ENCODE measurements at regions of chr10 and their contacts with region 1.

Region 1: DNA sequence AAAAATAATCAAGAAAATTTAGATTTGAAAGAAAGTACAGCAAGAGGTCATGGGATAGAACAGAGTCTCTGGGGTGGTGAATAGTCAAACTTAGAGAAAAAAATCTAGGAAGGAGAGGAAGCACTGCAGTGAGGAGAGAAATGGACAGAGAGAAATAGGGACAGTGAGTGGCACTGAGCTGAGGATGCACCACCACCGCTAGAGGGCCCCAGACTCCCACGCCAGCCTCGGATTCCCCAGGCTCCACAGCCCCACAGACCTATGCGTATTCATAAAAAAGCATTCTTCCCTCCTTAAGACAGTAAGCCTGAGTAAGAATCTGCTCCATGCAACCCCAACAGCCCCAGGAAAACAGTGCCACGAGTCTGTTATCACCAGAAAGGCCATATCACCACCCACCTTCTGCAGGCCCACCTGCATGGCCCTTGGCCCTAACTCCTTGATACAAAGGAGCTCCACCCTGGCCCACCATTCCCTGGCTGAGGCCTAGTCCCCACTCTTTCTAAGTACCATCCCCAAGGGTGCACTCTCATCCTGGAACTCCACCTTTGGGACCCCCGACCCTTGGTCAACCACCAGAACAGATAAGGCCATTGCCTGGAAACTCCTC is 91.0 kb downstream of the ALOX5 start:
- DNase-seq: peak; percentile 62 to 87 (median 85)
- H3K4me3 ChIP-seq: no peak overlapping the region
- H3K27ac ChIP-seq: no peak overlapping the region
- H3K4me1 ChIP-seq: peaks cover 22 to 54% (median 40%) of the 10 kb centered on the region in 4 experiments
- H3K27me3 ChIP-seq: no peaks in the 10 kb centered on the region

Region 2: DNA sequence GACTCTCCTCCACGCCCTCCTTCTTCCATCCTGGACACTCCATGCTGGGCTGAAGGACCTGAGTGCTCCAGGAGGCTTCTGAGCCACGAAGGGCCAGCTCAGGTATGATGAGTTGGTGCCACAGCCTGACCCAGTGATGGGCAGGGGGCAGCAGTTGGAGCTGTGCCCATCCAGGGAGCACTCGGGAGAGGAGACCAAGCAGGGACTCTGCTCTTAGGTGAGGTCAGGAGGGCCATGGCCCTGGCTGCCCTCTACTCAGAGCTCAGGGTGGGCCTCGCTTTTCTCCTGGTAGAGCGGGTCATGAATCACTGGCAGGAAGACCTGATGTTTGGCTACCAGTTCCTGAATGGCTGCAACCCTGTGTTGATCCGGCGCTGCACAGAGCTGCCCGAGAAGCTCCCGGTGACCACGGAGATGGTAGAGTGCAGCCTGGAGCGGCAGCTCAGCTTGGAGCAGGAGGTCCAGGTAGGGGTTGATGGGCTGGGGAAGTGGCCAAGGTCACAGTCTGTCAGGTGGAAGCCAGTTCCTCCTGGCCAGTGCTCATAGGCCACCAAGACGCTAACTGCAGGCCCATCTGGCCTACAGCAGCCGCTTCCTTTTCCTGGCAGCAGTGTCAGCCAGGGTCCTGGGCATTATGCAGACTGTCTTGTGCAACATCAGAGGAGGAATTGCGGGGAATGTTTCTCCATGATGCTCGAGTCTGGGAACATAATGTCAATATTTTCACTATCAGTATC is 40.2 kb before region 1 on chr10:
- CTCF ChIA-PET with region 1: no interaction called
- POLR2A ChIA-PET with region 1: no interaction called
- DNase-seq: peak in 2 of 3 donors; percentile 71 to 87
- H3K4me3 ChIP-seq: peak overlapping the region in 2 of 7 experiments; percentile 1 to 3
- H3K27ac ChIP-seq: no peak overlapping the region
- H3K4me1 ChIP-seq: peaks cover 8 to 72% (median 64%) of the 10 kb centered on the region in 4 experiments
- H3K27me3 ChIP-seq: no peaks in the 10 kb centered on the region

Region 3: GRCh38 chr10:45437587-45438465 is 27.2 kb before region 1 on chr10:
- CTCF ChIA-PET with region 1: no interaction called
- POLR2A ChIA-PET with region 1: no interaction called
- DNase-seq: peak in 2 of 3 donors; percentile 46 to 58
- H3K4me3 ChIP-seq: no peak overlapping the region
- H3K27ac ChIP-seq: peak overlapping the region in 1 of 2 experiments; percentile 69
- H3K4me1 ChIP-seq: peaks cover 0 to 10% (median 2%) of the 10 kb centered on the region in 4 experiments
- H3K27me3 ChIP-seq: no peaks in the 10 kb centered on the region

Region 4: GRCh38 chr10:45553155-45553554 is 88.1 kb after region 1 on chr10:
- CTCF ChIA-PET with region 1: no interaction called
- POLR2A ChIA-PET with region 1: no interaction called
- DNase-seq: no peak
- H3K4me3 ChIP-seq: no peak overlapping the region
- H3K27ac ChIP-seq: no peak overlapping the region
- H3K4me1 ChIP-seq: peaks cover 6 to 25% (median 19%) of the 10 kb centered on the region in 4 experiments
- H3K27me3 ChIP-seq: no peaks in the 10 kb centered on the region

Region 5: DNA sequence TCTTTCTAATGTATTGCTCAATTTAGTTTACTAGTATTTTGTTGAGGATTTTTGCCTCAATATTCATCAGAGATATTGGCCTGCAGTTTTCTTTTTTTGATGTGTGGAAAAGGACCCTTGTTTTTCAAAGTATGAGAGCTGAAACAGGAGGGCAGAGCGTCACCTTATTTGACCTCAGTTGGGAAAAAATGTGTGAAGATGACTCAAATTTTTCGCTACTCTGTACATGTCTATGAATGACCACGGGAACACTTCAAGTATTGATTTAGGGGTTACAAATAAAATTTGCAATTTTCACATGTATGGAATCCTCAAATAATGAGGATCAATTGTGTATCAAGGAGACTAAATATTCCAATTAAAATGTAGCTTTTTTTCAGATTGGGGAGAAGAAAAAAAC is 104.4 kb after region 1 on chr10:
- CTCF ChIA-PET with region 1: no interaction called
- POLR2A ChIA-PET with region 1: no interaction called
- DNase-seq: no peak
- H3K4me3 ChIP-seq: no peak overlapping the region
- H3K27ac ChIP-seq: no peak overlapping the region
- H3K4me1 ChIP-seq: no peaks in the 10 kb centered on the region
- H3K27me3 ChIP-seq: no peaks in the 10 kb centered on the region

Region 6: GRCh38 chr10:45602082-45602730 is 137.1 kb after region 1 on chr10:
- CTCF ChIA-PET with region 1: interaction called, 21 read pairs
- POLR2A ChIA-PET with region 1: no interaction called
- DNase-seq: no peak
- H3K4me3 ChIP-seq: no peak overlapping the region
- H3K27ac ChIP-seq: no peak overlapping the region
- H3K4me1 ChIP-seq: peaks cover 0 to 5% (median 0%) of the 10 kb centered on the region in 4 experiments
- H3K27me3 ChIP-seq: no peaks in the 10 kb centered on the region

Region 7: DNA sequence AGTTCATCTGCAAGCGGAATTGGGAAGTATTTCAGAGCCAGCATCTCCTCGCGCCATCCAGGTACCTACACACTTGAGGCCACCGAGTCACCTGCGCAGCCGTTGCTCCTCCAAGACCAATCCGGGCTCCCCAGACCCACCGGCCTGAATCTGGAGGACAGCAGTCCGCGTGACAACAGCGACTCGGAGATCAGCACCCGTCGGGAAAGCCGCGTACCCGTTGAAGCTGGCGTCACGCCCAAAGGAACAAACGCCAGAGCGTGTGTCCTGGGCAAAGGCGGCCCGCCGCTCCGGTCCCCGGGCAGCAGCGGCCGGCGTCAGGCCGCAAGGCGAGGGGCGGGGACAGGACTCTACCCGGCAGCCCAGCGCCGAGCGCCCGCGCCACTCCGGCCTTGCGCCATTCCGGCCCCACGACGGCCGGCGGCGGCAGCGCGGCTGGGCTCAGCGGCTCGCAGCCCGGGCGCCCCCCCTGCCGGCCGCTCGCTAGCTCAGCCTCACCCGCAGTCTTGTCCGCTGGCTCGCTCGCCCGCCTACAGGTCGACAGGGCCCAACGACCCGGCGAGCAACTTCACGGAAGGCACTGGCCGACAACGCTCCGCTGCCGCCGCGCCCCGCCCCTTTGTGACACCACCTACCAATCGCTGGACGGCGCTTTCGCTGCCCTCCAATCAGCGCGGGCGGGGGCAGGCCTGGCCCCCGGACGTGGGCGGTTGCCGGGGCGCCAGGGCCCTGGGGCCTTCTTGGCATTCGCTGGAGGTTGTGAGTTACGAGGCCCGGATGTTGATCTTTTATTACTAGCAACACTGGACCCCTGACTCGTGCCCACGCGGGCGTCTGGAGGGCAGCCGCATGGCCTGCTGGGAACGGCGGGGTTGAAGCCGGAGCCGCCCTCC is 207.4 kb after region 1 on chr10 and contains the start of gene ZFAND4:
- CTCF ChIA-PET with region 1: interaction called, 13 read pairs
- POLR2A ChIA-PET with region 1: no interaction called
- DNase-seq: peak; percentile 97 to 99 (median 98)
- H3K4me3 ChIP-seq: peak within 1 kb of the TSS; percentile 65 to 93 (median 88)
- H3K27ac ChIP-seq: peak within 1 kb of the TSS; percentile 58
- H3K4me1 ChIP-seq: peaks cover 0 to 14% (median 6%) of the 10 kb centered on the region in 4 experiments
- H3K27me3 ChIP-seq: no peaks in the 10 kb centered on the region

Measured in common myeloid progenitor, CD34-positive (primary cell).